Cardiac septum (tissue), 1 donor: ENCODE measurements at regions of chr16 and their contacts with region 1.

Region 1: GRCh38 chr16:88886845-88887521 is 20.5 kb upstream of the PABPN1L start:
- DNase-seq: peak; percentile 90

Region 2: DNA sequence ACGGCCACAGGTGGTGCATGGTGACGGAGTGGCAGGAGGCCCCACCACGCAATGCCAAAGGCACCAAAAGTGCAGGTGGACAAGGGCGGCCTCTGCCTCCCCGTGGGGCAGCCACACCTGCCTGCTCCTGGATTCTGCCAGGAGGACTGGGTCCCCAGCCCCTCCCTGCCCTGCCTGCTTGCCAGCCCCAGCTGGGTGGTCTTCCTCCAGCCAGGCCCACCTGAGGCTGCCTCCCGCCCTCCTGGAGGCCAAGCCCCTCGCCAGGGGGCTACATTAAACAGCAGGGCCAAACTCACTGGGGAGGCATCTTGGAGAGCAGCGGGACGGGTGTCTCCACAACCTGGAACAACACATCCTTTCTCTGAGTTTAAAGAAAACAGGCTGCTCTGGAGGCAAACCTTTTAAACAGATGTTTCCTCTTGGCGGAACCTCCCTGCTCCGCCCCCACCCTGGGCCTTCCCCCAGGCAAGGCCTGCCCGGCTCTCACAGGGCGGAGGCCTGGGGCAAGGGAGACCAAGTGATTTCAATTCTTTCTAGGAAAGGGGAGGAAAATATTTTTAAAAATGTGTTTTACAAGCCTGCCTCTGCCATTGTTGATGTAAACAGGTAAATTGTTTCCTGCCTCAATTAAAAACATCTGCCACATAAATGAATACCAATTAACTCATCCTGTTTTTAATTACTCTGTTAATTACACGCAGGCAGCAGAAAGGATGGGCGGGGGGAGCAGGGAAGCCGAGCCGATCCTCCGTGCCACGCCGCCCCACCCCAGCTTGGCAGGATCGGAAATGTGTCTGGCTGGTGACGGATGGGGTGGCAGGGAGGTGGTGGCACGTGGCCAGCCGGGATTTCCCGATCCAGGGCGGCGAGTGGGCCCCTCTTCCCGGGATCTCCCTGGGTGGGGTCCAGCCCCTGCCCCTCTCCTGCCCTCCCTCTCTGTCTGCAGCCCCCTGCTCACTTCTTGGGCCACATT is 33.9 kb after region 1 on chr16:
- intact Hi-C with region 1: loop called (anchors 2 kb)
- DNase-seq: peak; percentile 86

Region 3: GRCh38 chr16:88941913-88942909 is 55.2 kb after region 1 on chr16:
- intact Hi-C with region 1: loop called (anchors 1 kb)
- DNase-seq: peak; percentile 89